ENCODE measurements at regions of chr14 and their contacts with region 1.

Region 1: DNA sequence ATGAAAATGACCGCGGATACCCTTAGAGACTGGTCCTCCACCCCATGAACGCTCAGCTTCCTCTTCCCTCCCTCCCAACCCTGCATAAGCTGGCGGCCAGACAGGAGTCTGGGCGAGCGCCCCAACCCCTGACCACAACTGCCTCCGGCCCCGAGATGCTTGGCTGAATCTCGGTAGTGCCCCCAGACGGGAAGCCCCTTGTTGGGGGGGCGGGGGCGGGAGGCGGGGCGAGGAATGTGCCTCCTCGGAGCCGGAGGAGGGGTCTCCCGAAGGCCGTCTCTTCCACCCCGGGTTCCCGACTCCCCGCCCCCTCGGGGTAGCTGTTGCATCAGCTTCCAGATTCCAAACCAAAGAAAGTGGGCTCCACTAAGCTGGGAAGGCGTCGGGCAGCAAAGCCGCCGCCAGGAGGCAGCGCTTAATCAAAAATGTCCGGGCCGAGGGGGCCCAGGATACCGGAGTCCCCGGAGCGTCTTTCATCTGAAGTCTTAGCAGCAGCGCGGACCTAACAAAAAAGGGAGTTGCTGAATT is 7.1 kb upstream of the MRPL52 start:
- DNase-seq: peak; percentile 69
- ATAC-seq: peak; percentile 76
- H3K4me3 Mint-ChIP-seq: peak overlapping the region; percentile 86
- H3K27ac Mint-ChIP-seq: peak overlapping the region; percentile 92
- H3K4me1 Mint-ChIP-seq: peaks cover 60% of the 10 kb centered on the region
- H3K27me3 Mint-ChIP-seq: no peaks in the 10 kb centered on the region
- CTCF ChIP-seq: no peak

Region 2: GRCh38 chr14:22314181-22314820 is 508.3 kb before region 1 on chr14:
- CTCF ChIA-PET with region 1: no interaction called
- POLR2A ChIA-PET with region 1: interaction called, 10 read pairs
- intact Hi-C with region 1: no loop called
- DNase-seq: no peak
- ATAC-seq: peak; percentile 95
- H3K4me3 Mint-ChIP-seq: no peak overlapping the region
- H3K27ac Mint-ChIP-seq: no peak overlapping the region
- H3K4me1 Mint-ChIP-seq: no peaks in the 10 kb centered on the region
- H3K27me3 Mint-ChIP-seq: no peaks in the 10 kb centered on the region
- CTCF ChIP-seq: no peak

Region 3: GRCh38 chr14:22781586-22781991 is 41.0 kb before region 1 on chr14:
- CTCF ChIA-PET with region 1: interaction called, 5 read pairs
- POLR2A ChIA-PET with region 1: interaction called, 3 read pairs
- intact Hi-C with region 1: loop called (anchors 1 kb)
- DNase-seq: no peak
- ATAC-seq: no peak
- H3K4me3 Mint-ChIP-seq: no peak overlapping the region
- H3K27ac Mint-ChIP-seq: peak overlapping the region; percentile 76
- H3K4me1 Mint-ChIP-seq: peaks cover 15% of the 10 kb centered on the region
- H3K27me3 Mint-ChIP-seq: no peaks in the 10 kb centered on the region
- CTCF ChIP-seq: no peak

Region 4: GRCh38 chr14:22802860-22803686 is 19.6 kb before region 1 on chr14:
- CTCF ChIA-PET with region 1: interaction called, 7 read pairs
- POLR2A ChIA-PET with region 1: interaction called, 73 read pairs
- intact Hi-C with region 1: loop called (anchors 1 kb)
- DNase-seq: no peak
- ATAC-seq: peak; percentile 87
- H3K4me3 Mint-ChIP-seq: peak overlapping the region; percentile 74
- H3K27ac Mint-ChIP-seq: peak overlapping the region; percentile 93
- H3K4me1 Mint-ChIP-seq: peaks cover 81% of the 10 kb centered on the region
- H3K27me3 Mint-ChIP-seq: no peaks in the 10 kb centered on the region
- CTCF ChIP-seq: no peak

Region 5: GRCh38 chr14:22886500-22887259 is 64.0 kb after region 1 on chr14:
- CTCF ChIA-PET with region 1: no interaction called
- POLR2A ChIA-PET with region 1: interaction called, 4 read pairs
- intact Hi-C with region 1: loop called (anchors 5 kb)
- DNase-seq: peak; percentile 71
- ATAC-seq: peak; percentile 55
- H3K4me3 Mint-ChIP-seq: peak overlapping the region; percentile 90
- H3K27ac Mint-ChIP-seq: peak overlapping the region; percentile 97
- H3K4me1 Mint-ChIP-seq: peaks cover 80% of the 10 kb centered on the region
- H3K27me3 Mint-ChIP-seq: no peaks in the 10 kb centered on the region
- CTCF ChIP-seq: no peak

Measured in activated B cell treated with CpG ODN at 0.5 μM for 24 hours (primary cell).